ENCODE measurements at regions of chr19 and their contacts with region 1.

Region 1: DNA sequence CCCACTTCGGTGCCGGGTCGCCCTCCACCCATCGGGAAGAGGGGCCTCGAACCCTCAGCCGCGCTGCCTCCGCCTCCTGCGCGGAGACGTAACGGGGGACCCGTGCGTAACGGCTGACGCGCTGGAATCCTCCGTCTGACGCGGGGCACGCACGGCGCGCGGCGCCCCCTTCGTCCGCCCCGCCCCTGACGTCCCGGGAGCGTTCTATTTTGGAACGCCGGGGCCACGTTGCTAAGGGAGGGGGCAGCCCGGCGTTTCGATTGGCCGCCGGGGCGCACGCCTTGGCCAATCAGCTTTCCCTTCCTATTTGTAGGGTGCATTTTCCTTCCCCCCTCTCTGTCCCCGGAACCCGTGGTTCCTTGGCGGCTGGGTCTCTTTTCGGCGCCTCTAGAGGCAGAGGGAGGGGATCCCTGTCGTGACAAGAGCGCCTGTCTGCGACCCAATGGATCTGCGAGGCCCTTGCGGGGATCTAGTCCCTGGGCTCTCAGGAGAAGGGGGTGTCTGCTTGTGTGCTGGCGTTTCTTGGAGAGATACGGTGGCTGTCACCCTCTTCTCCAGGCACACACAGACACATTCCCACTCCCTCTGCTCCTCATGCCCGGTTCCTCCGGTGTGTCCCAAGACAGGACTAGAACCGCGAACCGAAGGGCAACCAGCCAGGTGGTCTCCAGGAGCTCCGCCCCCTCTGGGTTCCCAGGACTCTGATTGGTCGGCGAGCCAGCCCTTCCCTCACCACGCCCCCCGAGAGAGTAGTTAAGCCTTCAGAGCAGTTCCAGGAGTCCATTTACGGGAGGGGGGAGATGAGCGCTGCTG is 1.5 kb downstream of the FOSB start:
- DNase-seq: peak; percentile 85 to 95
- H3K4me3 ChIP-seq: peak overlapping the region; percentile 62 to 77
- H3K27ac ChIP-seq: peak overlapping the region; percentile 93 to 94
- H3K4me1 ChIP-seq: peaks cover 6 to 16% of the 10 kb centered on the region in 2 donors
- H3K27me3 ChIP-seq: no peaks in the 10 kb centered on the region
- CTCF ChIP-seq: peak in 1 of 3 experiments; percentile 26

Region 2: DNA sequence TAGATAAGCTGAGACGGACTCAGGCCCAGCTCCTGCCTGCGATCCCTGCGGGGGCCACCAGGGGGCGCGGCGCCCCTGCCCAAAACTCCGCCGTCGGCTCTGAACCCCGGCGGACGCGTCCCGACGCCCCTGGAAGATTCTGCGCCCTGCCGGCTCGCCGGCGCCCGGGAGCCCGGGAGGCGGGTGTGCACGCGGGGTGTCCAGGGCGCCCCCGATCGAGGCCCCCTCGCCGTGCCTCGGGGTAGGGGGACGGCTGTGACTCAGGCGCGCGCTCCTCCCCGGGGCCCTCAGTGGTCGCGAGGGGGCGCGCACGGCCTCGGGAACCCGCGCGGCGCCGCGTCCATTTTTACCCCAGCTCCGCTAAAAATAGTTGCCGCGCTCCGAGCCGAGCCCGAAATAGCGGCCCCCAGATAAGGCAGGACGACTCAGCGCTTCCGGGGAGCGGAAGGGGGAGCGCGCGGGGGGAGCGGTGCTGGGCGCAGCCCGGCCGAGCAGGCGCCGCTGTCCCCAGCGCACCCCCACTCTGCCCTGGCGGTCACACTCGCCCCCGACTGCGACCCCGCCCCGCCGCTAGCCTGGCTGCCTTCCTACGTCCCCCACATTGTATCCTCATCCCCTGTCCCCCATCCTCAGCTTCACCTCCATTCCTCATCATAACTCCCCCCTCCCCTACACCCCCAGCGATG is 29.6 kb before region 1 on chr19:
- intact Hi-C with region 1: loop called (anchors 1 kb)
- DNase-seq: peak; percentile 52 to 95
- H3K4me3 ChIP-seq: peak overlapping the region; percentile 50 to 87
- H3K27ac ChIP-seq: peak overlapping the region; percentile 97 to 99
- H3K4me1 ChIP-seq: peaks cover 5 to 22% of the 10 kb centered on the region in 2 donors
- H3K27me3 ChIP-seq: no peaks in the 10 kb centered on the region
- CTCF ChIP-seq: peak; percentile 99 to 100 (median 99)

Region 3: GRCh38 chr19:45455707-45456499 is 13.4 kb before region 1 on chr19:
- intact Hi-C with region 1: loop called (anchors 1 kb)
- DNase-seq: peak; percentile 93 to 99
- H3K4me3 ChIP-seq: peak overlapping the region in 1 of 2 donors; percentile 49
- H3K27ac ChIP-seq: peak overlapping the region; percentile 80 to 93
- H3K4me1 ChIP-seq: peaks cover 26 to 33% of the 10 kb centered on the region in 2 donors
- H3K27me3 ChIP-seq: no peaks in the 10 kb centered on the region
- CTCF ChIP-seq: no peak

Measured in ascending aorta (tissue), 2 donors.